Activated naive CD4-positive, alpha-beta T cell treated with anti-CD3 and anti-CD28 coated beads for 36 hours (primary cell): ENCODE measurements at regions of chr10 and their contacts with region 1.

Region 1: DNA sequence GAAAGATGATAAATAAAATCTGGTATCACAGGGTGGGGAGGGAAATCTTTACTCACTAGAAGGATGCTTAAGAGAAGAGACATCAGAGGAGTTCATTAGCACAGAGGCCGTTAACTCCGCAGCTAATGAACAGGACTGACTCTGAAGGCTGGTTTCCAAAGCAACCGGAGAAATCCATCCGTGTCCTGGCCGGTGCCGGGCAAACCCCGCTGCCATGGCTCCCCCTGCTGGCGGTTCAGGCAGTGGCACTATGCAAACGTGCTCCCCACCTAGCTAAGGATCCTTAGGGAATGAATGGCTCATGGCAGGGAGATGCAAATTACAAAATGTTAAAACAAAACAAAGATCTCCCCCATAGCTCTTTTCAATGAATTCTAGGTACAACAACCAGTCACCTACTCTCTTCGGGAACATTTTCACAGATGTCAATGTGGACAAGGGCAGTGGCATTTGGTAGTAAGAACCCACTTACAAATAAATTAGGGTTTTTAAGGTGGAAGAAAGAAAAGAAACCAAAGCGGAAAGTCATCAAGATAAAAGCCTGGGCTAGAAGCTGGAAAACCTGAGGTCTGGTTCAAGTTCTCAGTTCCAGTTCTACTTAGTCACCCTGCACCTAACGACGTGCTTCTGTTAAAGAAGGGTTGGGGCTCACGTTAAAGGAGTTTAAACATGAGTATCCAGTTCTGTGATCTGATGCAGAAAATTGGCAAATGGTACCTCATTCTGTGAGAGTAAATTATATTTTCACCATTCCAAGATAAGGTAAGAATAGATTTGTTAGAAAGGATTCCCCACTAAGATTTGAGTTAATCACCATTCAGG is 138.2 kb downstream of the SVIL start:
- DNase-seq: peak; percentile 75
- H3K4me3 Mint-ChIP-seq: no peak overlapping the region
- H3K27ac Mint-ChIP-seq: no peak overlapping the region
- H3K4me1 Mint-ChIP-seq: peaks cover 5% of the 10 kb centered on the region
- H3K27me3 Mint-ChIP-seq: no peaks in the 10 kb centered on the region

Region 2: DNA sequence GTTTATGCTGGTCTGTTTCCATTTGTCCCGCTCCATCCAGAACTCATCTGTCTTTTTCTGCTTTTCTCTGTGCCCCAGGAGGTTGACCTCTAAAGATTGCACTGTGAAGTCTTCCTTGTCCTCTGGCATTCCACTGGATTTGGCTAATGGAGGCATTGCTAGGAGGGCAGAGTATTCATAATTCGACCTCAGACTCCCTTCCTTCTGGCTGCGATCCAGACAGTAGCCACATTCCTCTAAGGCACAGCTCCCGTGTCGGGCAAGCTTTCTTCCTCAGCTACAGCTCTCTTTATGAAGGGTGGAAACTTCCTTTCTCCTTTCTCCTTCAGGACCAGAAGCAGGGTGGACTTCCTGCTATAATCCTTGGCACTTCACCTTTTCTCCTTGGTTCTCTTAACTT is 643.4 kb before region 1 on chr10:
- CTCF ChIA-PET with region 1: no interaction called
- intact Hi-C with region 1: no loop called
- DNase-seq: no peak
- H3K4me3 Mint-ChIP-seq: no peak overlapping the region
- H3K27ac Mint-ChIP-seq: no peak overlapping the region
- H3K4me1 Mint-ChIP-seq: no peaks in the 10 kb centered on the region
- H3K27me3 Mint-ChIP-seq: peaks cover 7% of the 10 kb centered on the region

Region 3: GRCh38 chr10:29377333-29377961 is 119.1 kb before region 1 on chr10:
- CTCF ChIA-PET with region 1: interaction called, 7 read pairs
- intact Hi-C with region 1: loop called (anchors 1 kb)
- DNase-seq: peak; percentile 26
- H3K4me3 Mint-ChIP-seq: no peak overlapping the region
- H3K27ac Mint-ChIP-seq: no peak overlapping the region
- H3K4me1 Mint-ChIP-seq: peaks cover 8% of the 10 kb centered on the region
- H3K27me3 Mint-ChIP-seq: peaks cover 5% of the 10 kb centered on the region

Region 4: GRCh38 chr10:29386342-29386999 is 110.1 kb before region 1 on chr10:
- CTCF ChIA-PET with region 1: interaction called, 11 read pairs
- intact Hi-C with region 1: loop called (anchors 1 kb)
- DNase-seq: peak; percentile 11
- H3K4me3 Mint-ChIP-seq: no peak overlapping the region
- H3K27ac Mint-ChIP-seq: no peak overlapping the region
- H3K4me1 Mint-ChIP-seq: no peaks in the 10 kb centered on the region
- H3K27me3 Mint-ChIP-seq: peaks cover 4% of the 10 kb centered on the region

Region 5: DNA sequence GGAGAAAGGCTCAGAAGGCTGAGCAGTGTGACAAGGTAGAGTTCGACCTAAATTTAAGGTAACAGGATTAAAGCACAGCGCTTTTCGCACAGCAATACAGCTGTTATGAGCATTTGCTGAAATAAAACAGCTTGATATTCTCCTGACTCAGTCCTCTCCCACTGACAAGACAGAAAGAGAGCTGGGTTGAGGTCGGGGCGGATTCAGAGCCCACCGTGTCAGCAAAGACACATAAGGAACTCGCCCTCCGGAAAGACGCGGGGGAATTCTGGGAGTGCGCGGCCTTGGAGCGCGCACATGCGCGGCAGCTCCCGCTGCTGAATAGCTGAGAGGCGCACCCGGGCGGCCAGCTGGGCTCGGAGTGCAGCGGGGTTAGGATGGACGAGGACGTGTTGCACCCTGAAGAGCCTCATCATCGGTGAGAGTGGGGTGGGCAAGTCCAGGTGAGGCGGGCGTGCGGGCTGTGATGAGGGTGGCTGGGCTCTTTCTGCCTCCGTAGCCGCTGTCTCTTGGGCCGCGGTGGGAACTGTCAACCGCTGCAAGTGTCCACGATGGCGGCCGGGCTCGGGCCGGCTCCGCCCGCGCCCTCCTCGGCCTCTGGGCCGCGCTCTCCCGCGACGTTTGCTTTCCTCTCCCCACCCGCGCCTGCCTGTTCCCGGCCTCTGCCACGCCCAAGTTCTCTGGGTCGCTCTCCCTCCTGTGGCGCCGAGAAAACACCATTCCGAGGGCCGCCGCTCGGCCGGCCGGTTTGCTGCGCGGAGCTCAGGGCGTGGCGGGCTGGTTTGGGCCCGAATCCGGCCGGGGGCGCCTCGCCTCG is 87.1 kb before region 1 on chr10:
- CTCF ChIA-PET with region 1: no interaction called
- intact Hi-C with region 1: no loop called
- DNase-seq: peak; percentile 55
- H3K4me3 Mint-ChIP-seq: peak overlapping the region; percentile 89
- H3K27ac Mint-ChIP-seq: peak overlapping the region; percentile 87
- H3K4me1 Mint-ChIP-seq: peaks cover 22% of the 10 kb centered on the region
- H3K27me3 Mint-ChIP-seq: no peaks in the 10 kb centered on the region

Region 6: GRCh38 chr10:29470355-29470705 is 26.2 kb before region 1 on chr10:
- CTCF ChIA-PET with region 1: no interaction called
- intact Hi-C with region 1: loop called (anchors 2 kb)
- DNase-seq: no peak
- H3K4me3 Mint-ChIP-seq: no peak overlapping the region
- H3K27ac Mint-ChIP-seq: no peak overlapping the region
- H3K4me1 Mint-ChIP-seq: no peaks in the 10 kb centered on the region
- H3K27me3 Mint-ChIP-seq: no peaks in the 10 kb centered on the region